Activated CD4-positive, alpha-beta T cell treated with anti-CD3 and anti-CD28 coated beads, Interleukin-2, amount 10 ng/mL, durations not matched to agents 24 days and 14 days (primary cell): ENCODE measurements at regions of chr6 and their contacts with region 1.

Region 1: DNA sequence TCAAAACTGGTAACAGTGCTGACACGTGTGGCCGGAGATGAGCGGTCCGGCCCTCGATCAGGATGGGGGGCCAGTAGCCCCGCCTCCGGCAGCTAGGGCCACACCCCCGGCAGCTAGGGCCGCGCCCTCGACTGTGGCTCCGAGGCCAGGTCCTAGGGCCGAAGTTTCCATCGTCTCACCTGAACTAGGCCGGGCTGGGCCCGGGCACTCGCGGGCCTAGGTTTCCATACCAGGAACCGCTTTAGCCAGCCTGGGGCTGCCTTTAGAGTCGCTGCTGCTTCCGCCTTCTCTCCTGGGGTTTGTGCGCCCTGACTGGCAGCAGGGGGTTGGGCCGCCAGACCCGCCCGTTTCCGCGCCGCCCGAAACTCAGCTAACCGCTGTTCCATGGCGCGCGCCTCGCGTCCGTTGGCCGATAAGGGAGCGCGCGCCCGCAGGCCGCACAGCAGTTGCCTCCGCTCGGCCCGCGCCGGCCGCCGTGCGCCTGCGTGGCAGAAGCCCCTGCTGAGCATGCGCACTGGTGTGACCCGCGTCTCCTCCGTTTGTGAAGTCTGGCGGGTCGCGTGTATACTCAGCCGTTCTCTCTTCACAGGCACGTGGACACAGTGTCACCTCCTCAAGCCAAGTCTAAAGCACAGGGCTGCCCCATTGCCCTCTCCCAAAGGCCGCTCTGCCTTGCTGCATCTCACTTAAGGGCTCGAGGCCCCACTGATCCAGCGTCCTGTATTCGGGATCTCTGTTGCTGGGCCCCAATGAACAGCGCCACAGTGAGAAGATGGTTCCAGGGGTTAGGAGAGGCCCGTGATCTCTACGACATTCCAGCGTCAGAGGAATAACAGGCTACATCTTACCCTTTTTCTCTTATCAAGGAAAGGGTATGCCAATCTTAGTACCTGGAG is at the start of gene SAYSD1:
- DNase-seq: peak; percentile 98
- H3K4me3 Mint-ChIP-seq: peak within 1 kb of the TSS; percentile 87
- H3K27ac Mint-ChIP-seq: peak within 1 kb of the TSS; percentile 97
- H3K4me1 Mint-ChIP-seq: peaks cover 51% of the 10 kb centered on the region
- H3K27me3 Mint-ChIP-seq: no peaks in the 10 kb centered on the region
- total RNA-seq, gene SAYSD1: 13.7 and 14.8 TPM in 2 replicates

Region 2: DNA sequence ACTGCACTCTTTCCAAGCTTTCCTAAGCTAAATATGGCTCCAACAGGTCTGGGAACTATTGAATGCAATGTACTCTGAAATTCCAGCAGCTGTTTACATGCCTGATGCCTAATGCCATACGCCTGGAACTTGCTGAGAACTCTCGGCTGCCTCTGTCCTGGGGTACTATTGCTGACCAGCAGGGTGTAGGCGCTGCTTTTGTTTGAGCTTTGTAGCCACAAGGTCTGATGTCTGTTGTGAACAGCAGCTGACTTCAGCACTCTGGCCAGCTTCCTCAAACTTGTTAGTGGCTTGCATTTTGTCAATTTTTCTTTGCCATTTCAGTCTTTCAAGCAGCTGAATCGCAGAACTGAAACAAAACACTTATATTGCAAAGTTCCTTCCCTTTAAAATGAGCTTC is 26.6 kb before region 1 on chr6:
- intact Hi-C with region 1: loop called (anchors 1 kb)
- DNase-seq: peak; percentile 69
- H3K4me3 Mint-ChIP-seq: no peak overlapping the region
- H3K27ac Mint-ChIP-seq: no peak overlapping the region
- H3K4me1 Mint-ChIP-seq: peaks cover 18% of the 10 kb centered on the region
- H3K27me3 Mint-ChIP-seq: peaks cover 63% of the 10 kb centered on the region

Region 3: GRCh38 chr6:39153766-39154397 is 38.9 kb after region 1 on chr6:
- intact Hi-C with region 1: loop called (anchors 1 kb)
- DNase-seq: peak; percentile 71
- H3K4me3 Mint-ChIP-seq: no peak overlapping the region
- H3K27ac Mint-ChIP-seq: peak overlapping the region; percentile 83
- H3K4me1 Mint-ChIP-seq: peaks cover 22% of the 10 kb centered on the region
- H3K27me3 Mint-ChIP-seq: peaks cover 4% of the 10 kb centered on the region